Psoas muscle (tissue), 8 donors: ENCODE measurements at regions of chr2 and their contacts with region 1.

Region 1: GRCh38 chr2:172096626-172097547 is 5.8 kb downstream of the DLX2 start:
- DNase-seq: no peak
- ATAC-seq: peak in 2 of 4 donors; percentile 6 to 30
- H3K4me3 ChIP-seq: peak overlapping the region; percentile 64
- H3K27ac ChIP-seq: no peak overlapping the region
- H3K4me1 ChIP-seq: peaks cover 67% of the 10 kb centered on the region
- H3K27me3 ChIP-seq: peaks cover 6 to 100% (median 78%) of the 10 kb centered on the region in 3 donors
- CTCF ChIP-seq: no peak

Region 2: GRCh38 chr2:172066394-172066886 is 30.4 kb before region 1 on chr2:
- intact Hi-C with region 1: loop called in 1 of 2 experiments (anchors 2 kb)
- DNase-seq: no peak
- ATAC-seq: no peak
- H3K4me3 ChIP-seq: no peak overlapping the region
- H3K27ac ChIP-seq: no peak overlapping the region
- H3K4me1 ChIP-seq: no peaks in the 10 kb centered on the region
- H3K27me3 ChIP-seq: no peaks in the 10 kb centered on the region
- CTCF ChIP-seq: no peak